CD8-positive, alpha-beta memory T cell (primary cell): ENCODE measurements at regions of chr15 and their contacts with region 1.

Region 1: GRCh38 chr15:59528965-59529402 is 82.6 kb upstream of the GCNT3 start:
- DNase-seq: peak; percentile 51 to 74 (median 54)
- H3K4me3 ChIP-seq: no peak overlapping the region
- H3K4me3 Mint-ChIP-seq: no peak overlapping the region
- H3K27ac ChIP-seq: no peak overlapping the region
- H3K27ac Mint-ChIP-seq: no peak overlapping the region
- H3K4me1 ChIP-seq: peaks cover 9% of the 10 kb centered on the region
- H3K4me1 Mint-ChIP-seq: peaks cover 12 to 17% (median 12%) of the 10 kb centered on the region in 3 donors
- H3K27me3 ChIP-seq: no peaks in the 10 kb centered on the region
- H3K27me3 Mint-ChIP-seq: peaks cover 15 to 19% of the 10 kb centered on the region in 2 donors

Region 2: GRCh38 chr15:58957101-58957973 is 571.6 kb before region 1 on chr15:
- CTCF ChIA-PET with region 1: interaction called, 13 read pairs
- POLR2A ChIA-PET with region 1: no interaction called
- DNase-seq: peak; percentile 26 to 62 (median 50)
- H3K4me3 ChIP-seq: no peak overlapping the region
- H3K4me3 Mint-ChIP-seq: no peak overlapping the region
- H3K27ac ChIP-seq: no peak overlapping the region
- H3K27ac Mint-ChIP-seq: peak overlapping the region in 1 of 8 donors; percentile 58
- H3K4me1 ChIP-seq: no peaks in the 10 kb centered on the region
- H3K4me1 Mint-ChIP-seq: peaks cover 1 to 9% (median 4%) of the 10 kb centered on the region in 3 donors
- H3K27me3 ChIP-seq: no peaks in the 10 kb centered on the region
- H3K27me3 Mint-ChIP-seq: peaks cover 0 to 4% of the 10 kb centered on the region in 2 donors

Region 3: GRCh38 chr15:58980351-58980939 is 548.5 kb before region 1 on chr15:
- CTCF ChIA-PET with region 1: interaction called, 19 read pairs
- POLR2A ChIA-PET with region 1: no interaction called
- DNase-seq: peak in 2 of 5 donors; percentile 31 to 37
- H3K4me3 ChIP-seq: no peak overlapping the region
- H3K4me3 Mint-ChIP-seq: peak overlapping the region in 3 of 7 donors; percentile 9 to 65 (median 62)
- H3K27ac ChIP-seq: no peak overlapping the region
- H3K27ac Mint-ChIP-seq: peak overlapping the region in 3 of 8 donors; percentile 50 to 85 (median 64)
- H3K4me1 ChIP-seq: peaks cover 26% of the 10 kb centered on the region
- H3K4me1 Mint-ChIP-seq: peaks cover 24 to 37% (median 34%) of the 10 kb centered on the region in 3 donors
- H3K27me3 ChIP-seq: no peaks in the 10 kb centered on the region
- H3K27me3 Mint-ChIP-seq: no peaks in the 10 kb centered on the region

Region 4: GRCh38 chr15:59516655-59517461 is 12.1 kb before region 1 on chr15:
- CTCF ChIA-PET with region 1: interaction called, 18 read pairs
- POLR2A ChIA-PET with region 1: no interaction called
- DNase-seq: no peak
- H3K4me3 ChIP-seq: no peak overlapping the region
- H3K4me3 Mint-ChIP-seq: no peak overlapping the region
- H3K27ac ChIP-seq: no peak overlapping the region
- H3K27ac Mint-ChIP-seq: no peak overlapping the region
- H3K4me1 ChIP-seq: no peaks in the 10 kb centered on the region
- H3K4me1 Mint-ChIP-seq: no peaks in the 10 kb centered on the region
- H3K27me3 ChIP-seq: no peaks in the 10 kb centered on the region
- H3K27me3 Mint-ChIP-seq: peaks cover 9 to 11% of the 10 kb centered on the region in 2 donors

Region 5: DNA sequence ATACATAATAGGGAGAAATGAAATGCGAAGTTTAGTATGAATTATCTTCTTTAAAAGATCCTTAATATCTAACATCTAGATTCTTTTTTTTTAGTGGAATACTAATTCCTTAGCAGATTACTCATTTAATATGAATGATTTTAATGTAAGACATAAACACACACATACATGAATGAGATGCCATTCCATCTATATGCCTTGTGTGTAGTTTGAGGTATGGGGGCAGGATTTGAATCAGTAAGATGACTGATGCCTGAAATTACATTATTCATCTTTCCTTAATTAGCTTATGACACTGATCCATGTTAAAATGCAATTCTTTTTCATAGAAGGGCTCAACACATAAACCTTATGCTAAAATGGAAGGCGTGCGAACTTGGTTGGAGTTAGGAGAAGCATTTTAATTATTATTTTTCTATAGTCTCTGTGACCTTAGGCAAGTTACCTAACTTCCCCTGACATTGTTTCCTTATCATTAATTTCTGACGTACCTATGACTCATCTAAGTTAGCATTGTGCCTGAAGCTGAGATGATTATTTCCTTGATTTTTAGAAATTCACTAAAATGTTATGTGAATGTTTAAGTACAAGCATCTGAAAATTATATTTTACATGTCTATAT is 170.9 kb after region 1 on chr15:
- CTCF ChIA-PET with region 1: no interaction called
- POLR2A ChIA-PET with region 1: no interaction called
- DNase-seq: no peak
- H3K4me3 ChIP-seq: no peak overlapping the region
- H3K4me3 Mint-ChIP-seq: no peak overlapping the region
- H3K27ac ChIP-seq: no peak overlapping the region
- H3K27ac Mint-ChIP-seq: no peak overlapping the region
- H3K4me1 ChIP-seq: no peaks in the 10 kb centered on the region
- H3K4me1 Mint-ChIP-seq: no peaks in the 10 kb centered on the region
- H3K27me3 ChIP-seq: no peaks in the 10 kb centered on the region
- H3K27me3 Mint-ChIP-seq: peaks cover under 1 to 14% of the 10 kb centered on the region in 2 donors